SK-N-SH (cell line): ENCODE measurements at regions of chr2 and their contacts with region 1.

Region 1: DNA sequence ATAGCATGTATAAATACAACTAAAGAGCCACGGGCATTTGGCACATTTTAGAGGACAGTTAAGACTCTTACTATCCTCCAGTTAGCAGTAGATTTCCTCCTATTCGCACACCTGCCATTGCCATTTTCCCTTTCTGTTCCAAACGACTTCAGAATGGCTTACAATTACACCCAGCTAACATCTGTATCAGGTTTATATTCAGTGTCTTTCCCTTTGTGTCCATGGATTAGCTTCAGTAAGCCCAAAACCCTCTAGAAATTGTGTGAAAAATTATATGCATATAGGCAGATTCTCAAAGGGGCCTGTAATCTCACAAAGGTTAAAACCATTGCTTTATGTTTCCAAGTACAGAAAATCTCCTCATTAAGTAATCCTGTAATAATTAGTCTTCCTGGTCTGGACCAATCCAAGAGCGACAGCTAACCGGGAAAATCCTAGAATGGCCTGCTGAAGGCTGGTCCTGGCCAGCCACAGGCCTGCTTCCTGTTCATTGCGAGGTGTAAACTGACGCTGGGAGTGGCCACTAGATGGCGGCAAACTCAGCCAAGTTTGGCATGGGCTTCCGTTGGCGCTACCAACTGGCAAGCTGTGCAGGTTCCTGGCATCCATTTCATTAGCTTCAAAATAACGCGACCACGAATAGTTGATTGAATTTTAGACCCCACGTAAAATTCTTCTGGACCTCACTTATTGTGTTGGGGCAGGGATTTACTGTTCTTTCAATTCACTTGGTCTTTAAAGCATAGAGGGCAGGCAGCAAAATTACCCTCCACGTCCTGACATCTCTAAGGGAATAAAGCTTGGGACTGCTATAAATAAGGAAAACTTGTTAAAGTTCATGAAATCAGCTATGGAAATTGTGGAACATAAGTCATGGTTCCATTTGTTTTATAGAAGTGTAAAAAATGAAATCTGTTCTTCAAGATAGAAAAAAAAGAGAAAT is 17.1 kb downstream of the ARHGAP25 start:
- DNase-seq: peak; percentile 83
- H3K4me3 ChIP-seq: peak overlapping the region in 1 of 2 experiments; percentile 34; a peak in 1 of 4 replicates
- H3K27ac ChIP-seq: no peak overlapping the region
- H3K4me1 ChIP-seq: no peaks in the 10 kb centered on the region
- H3K27me3 ChIP-seq: no peaks in the 10 kb centered on the region
- CTCF ChIP-seq: peak; percentile 92
- EP300 ChIP-seq: no peak
- RAD21 ChIP-seq: peak; percentile 94

Region 2: GRCh38 chr2:68487773-68488355 is 263.8 kb before region 1 on chr2:
- CTCF ChIA-PET with region 1: interaction called, 11 read pairs
- POLR2A ChIA-PET with region 1: no interaction called
- DNase-seq: peak; percentile 36
- H3K4me3 ChIP-seq: no peak overlapping the region; a peak in 1 of 4 replicates
- H3K27ac ChIP-seq: no peak overlapping the region
- H3K4me1 ChIP-seq: no peaks in the 10 kb centered on the region; a peak in 1 of 4 replicates
- H3K27me3 ChIP-seq: no peaks in the 10 kb centered on the region
- CTCF ChIP-seq: peak; percentile 72
- EP300 ChIP-seq: no peak
- RAD21 ChIP-seq: peak; percentile 66

Region 3: GRCh38 chr2:68721482-68722101 is 30.1 kb before region 1 on chr2:
- CTCF ChIA-PET with region 1: interaction called, 21 read pairs
- POLR2A ChIA-PET with region 1: no interaction called
- DNase-seq: no peak
- H3K4me3 ChIP-seq: no peak overlapping the region
- H3K27ac ChIP-seq: no peak overlapping the region
- H3K4me1 ChIP-seq: peaks cover 0 to 4% of the 10 kb centered on the region in 2 experiments; a peak in 1 of 4 replicates
- H3K27me3 ChIP-seq: no peaks in the 10 kb centered on the region
- CTCF ChIP-seq: no peak
- EP300 ChIP-seq: no peak
- RAD21 ChIP-seq: no peak

Region 4: DNA sequence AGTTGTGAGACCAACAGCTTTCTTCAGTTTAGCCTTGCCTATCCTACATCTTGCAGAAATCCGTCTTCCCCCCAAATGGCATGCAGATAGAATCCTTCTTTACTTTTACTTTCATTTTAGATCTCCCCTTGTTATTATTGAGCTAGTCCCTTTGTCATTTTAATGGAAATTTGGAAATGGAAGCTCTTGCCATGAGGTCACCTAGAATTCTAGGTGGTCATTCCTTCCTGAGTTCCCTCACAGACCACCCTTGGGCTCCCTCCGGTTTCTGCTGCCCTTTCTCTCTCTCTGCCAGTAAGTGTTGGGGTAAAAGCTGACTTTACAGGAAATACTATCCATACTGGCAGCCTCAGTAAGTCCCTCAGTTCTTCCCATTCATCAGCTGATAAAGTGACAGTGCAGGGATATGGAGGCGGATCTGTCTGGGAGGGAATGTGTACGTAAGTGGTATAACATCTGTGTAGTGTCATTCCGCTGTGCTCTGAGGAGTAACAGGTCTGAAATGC is 13.2 kb after region 1 on chr2:
- CTCF ChIA-PET with region 1: interaction called, 13 read pairs
- POLR2A ChIA-PET with region 1: no interaction called
- DNase-seq: no peak
- H3K4me3 ChIP-seq: no peak overlapping the region
- H3K27ac ChIP-seq: no peak overlapping the region
- H3K4me1 ChIP-seq: peaks cover 0 to 7% of the 10 kb centered on the region in 2 experiments; a peak in 1 of 4 replicates
- H3K27me3 ChIP-seq: no peaks in the 10 kb centered on the region
- CTCF ChIP-seq: no peak
- EP300 ChIP-seq: no peak
- RAD21 ChIP-seq: no peak

Region 5: GRCh38 chr2:68828887-68829708 is 77.4 kb after region 1 on chr2:
- CTCF ChIA-PET with region 1: interaction called, 11 read pairs
- POLR2A ChIA-PET with region 1: no interaction called
- DNase-seq: peak; percentile 87
- H3K4me3 ChIP-seq: peak overlapping the region; percentile 16 to 28; a peak in 2 of 4 replicates
- H3K27ac ChIP-seq: peak overlapping the region; percentile 45 to 53; a peak in 3 of 4 replicates
- H3K4me1 ChIP-seq: peaks cover 17 to 30% of the 10 kb centered on the region in 2 experiments
- H3K27me3 ChIP-seq: no peaks in the 10 kb centered on the region
- CTCF ChIP-seq: no peak
- EP300 ChIP-seq: peak in 1 of 2 experiments; percentile 59; a peak in 1 of 4 replicates
- RAD21 ChIP-seq: no peak

Region 6: GRCh38 chr2:68909793-68910674 is 158.4 kb after region 1 on chr2:
- CTCF ChIA-PET with region 1: interaction called, 156 read pairs
- POLR2A ChIA-PET with region 1: no interaction called
- DNase-seq: peak; percentile 70
- H3K4me3 ChIP-seq: peak overlapping the region in 1 of 2 experiments; percentile 6; a peak in 1 of 4 replicates
- H3K27ac ChIP-seq: no peak overlapping the region
- H3K4me1 ChIP-seq: peaks cover 0 to 8% of the 10 kb centered on the region in 2 experiments; a peak in 2 of 4 replicates
- H3K27me3 ChIP-seq: no peaks in the 10 kb centered on the region
- CTCF ChIP-seq: peak; percentile 92
- EP300 ChIP-seq: no peak
- RAD21 ChIP-seq: peak; percentile 96

Region 7: GRCh38 chr2:68943581-68944568 is 192.2 kb after region 1 on chr2:
- CTCF ChIA-PET with region 1: interaction called, 18 read pairs
- POLR2A ChIA-PET with region 1: no interaction called
- DNase-seq: peak; percentile 68
- H3K4me3 ChIP-seq: no peak overlapping the region
- H3K27ac ChIP-seq: no peak overlapping the region; a peak in 1 of 4 replicates
- H3K4me1 ChIP-seq: peaks cover 0 to 2% of the 10 kb centered on the region in 2 experiments; a peak in 1 of 4 replicates
- H3K27me3 ChIP-seq: no peaks in the 10 kb centered on the region
- CTCF ChIP-seq: peak; percentile 78
- EP300 ChIP-seq: no peak
- RAD21 ChIP-seq: peak; percentile 78